ENCODE measurements at regions of chr5 and their contacts with region 1.

Region 1: GRCh38 chr5:16552666-16553343 is 64.0 kb downstream of the RETREG1 start:
- DNase-seq: peak; percentile 88
- ATAC-seq: peak; percentile 88

Region 2: DNA sequence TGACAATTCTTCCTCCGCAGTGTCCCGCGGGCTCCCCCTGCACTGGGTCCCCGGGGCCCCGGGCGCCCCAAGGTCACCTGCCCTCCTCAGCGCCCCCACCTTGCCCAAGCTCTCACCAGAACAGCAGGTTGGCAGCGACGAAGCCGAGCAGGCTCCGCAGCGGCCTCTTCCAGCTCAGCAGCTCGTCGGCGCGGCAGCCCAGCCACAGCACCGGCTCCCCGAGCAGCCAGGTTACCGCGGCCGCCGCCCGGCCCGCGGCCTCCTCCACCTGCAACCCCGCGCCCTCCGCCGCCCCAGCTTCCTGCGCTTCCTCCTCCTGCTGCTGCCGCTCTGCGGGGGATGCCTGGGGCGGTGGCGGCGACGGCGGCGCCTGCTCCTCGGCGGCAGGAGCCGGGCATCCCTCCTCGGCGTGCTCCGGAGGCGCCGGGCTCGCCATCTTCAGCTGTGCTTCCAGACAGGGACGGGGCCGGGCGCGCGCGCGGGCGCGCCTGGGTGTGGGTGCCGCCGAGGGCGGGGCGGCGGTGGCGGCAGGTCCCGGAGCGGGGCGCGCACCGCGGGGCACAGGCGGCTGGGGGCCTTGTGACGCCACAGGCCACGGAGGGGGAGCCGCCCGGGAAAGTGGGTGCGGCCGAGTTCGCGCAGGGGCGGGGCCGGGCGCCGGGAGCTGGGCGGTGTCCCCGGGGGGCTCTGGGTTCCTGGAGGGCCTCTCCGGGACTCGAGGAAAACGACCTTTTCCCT is 63.9 kb after region 1 on chr5 and contains the start of gene RETREG1:
- intact Hi-C with region 1: loop called (anchors 5 kb)
- DNase-seq: peak; percentile 88
- ATAC-seq: peak; percentile 89
- total RNA-seq, gene RETREG1: 197 TPM

Region 3: DNA sequence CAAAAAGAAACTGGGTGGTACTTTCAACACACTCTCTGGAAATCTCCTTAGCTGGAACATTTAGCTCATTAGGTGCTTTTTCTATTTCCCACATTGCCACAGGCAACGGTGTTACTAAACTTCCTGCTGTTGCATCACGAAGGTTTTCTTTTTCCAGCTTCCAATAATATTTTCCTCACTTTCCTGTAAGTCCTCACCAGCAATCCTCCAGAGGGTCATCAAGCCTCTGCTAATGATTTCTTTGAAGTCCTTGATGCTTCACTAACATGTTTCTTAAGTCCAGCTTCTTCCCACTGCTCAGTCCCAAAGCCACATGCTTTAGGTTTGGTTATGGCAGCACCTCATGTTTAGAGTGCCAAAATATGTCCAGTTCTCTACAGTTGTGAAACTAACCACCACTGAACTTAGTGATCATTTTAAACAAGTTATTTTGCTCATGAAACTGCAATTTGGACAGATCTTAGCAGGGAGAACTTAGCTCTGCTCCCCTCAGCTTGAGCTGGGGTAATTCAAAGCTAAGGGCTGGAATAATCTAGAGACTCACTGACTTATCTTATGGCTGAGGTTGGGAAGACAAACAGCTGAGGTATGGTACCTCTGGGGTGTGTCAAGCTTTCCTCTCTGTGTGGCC is 103.9 kb after region 1 on chr5:
- intact Hi-C with region 1: no loop called
- DNase-seq: no peak
- ATAC-seq: no peak

Measured in Right ventricle myocardium inferior (tissue), 1 donor.